Mammary epithelial cell (primary cell): ENCODE measurements at regions of chr5 and their contacts with region 1.

Region 1: GRCh38 chr5:148179234-148179824 is 11.0 kb downstream of the SPINK14 start:
- DNase-seq: peak; percentile 59
- H3K4me3 ChIP-seq: no peak overlapping the region
- H3K27ac ChIP-seq: no peak overlapping the region
- H3K4me1 ChIP-seq: no peaks in the 10 kb centered on the region
- H3K27me3 ChIP-seq: no peaks in the 10 kb centered on the region
- CTCF ChIP-seq: peak; percentile 76 to 79

Region 2: GRCh38 chr5:148306446-148306845 is 127.1 kb after region 1 on chr5:
- CTCF ChIA-PET with region 1: no interaction called
- dilution Hi-C with region 1: no loop called
- in situ Hi-C with region 1: no loop called
- intact Hi-C with region 1: loop called (anchors 1 kb)
- DNase-seq: no peak
- H3K4me3 ChIP-seq: no peak overlapping the region
- H3K27ac ChIP-seq: no peak overlapping the region
- H3K4me1 ChIP-seq: no peaks in the 10 kb centered on the region
- H3K27me3 ChIP-seq: no peaks in the 10 kb centered on the region
- CTCF ChIP-seq: peak in 1 of 2 donors; percentile 39

Region 3: GRCh38 chr5:148353634-148354033 is 174.3 kb after region 1 on chr5:
- CTCF ChIA-PET with region 1: no interaction called
- dilution Hi-C with region 1: no loop called
- in situ Hi-C with region 1: no loop called
- intact Hi-C with region 1: loop called (anchors 1 kb)
- DNase-seq: no peak
- H3K4me3 ChIP-seq: no peak overlapping the region
- H3K27ac ChIP-seq: no peak overlapping the region
- H3K4me1 ChIP-seq: no peaks in the 10 kb centered on the region
- H3K27me3 ChIP-seq: no peaks in the 10 kb centered on the region
- CTCF ChIP-seq: peak in 1 of 2 donors; percentile 34

Region 4: GRCh38 chr5:148708854-148709253 is 529.5 kb after region 1 on chr5:
- CTCF ChIA-PET with region 1: no interaction called
- dilution Hi-C with region 1: no loop called
- in situ Hi-C with region 1: loop called in 1 of 2 experiments (anchors 25 kb)
- intact Hi-C with region 1: no loop called
- DNase-seq: no peak
- H3K4me3 ChIP-seq: no peak overlapping the region
- H3K27ac ChIP-seq: no peak overlapping the region
- H3K4me1 ChIP-seq: no peaks in the 10 kb centered on the region
- H3K27me3 ChIP-seq: no peaks in the 10 kb centered on the region
- CTCF ChIP-seq: no peak